ENCODE measurements at regions of chr15 and their contacts with region 1.

Region 1: GRCh38 chr15:74302821-74303359 is 64.6 kb downstream of the CYP11A1 start:
- DNase-seq: peak; percentile 79
- CTCF ChIP-seq: peak; percentile 75

Region 2: DNA sequence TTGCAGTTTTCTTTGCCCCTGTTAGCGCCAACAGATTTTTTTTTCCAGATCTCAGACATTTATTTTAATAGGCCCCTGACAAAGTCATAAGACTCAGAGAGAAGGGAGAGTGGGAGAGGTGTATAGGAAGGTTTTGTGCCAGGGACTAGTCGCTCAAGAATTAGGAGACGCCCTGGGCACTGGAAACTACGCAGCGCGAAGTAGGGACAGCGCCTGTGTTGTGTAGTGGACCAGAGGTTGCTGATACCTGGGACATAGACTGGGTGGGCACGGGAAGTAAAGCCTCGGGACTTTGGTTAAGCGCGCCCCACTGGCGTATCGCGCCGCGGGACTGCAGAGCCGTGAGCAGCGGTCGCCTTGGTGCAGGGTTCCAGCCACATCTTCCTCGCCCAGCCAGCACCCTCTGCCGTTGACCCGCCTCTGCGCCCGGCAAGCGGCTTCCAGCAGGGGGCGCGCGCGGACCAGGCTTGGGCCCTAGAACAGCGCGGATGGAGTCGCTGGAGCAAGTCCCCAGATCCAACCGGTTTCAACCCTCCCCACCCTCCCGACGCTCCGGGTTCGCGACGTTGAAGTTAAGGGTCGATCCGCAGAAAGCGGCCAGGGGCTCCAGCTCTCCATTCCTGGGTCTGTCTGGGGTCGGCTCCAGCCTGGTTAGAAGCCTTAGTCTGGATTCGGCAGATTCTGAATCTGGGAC is 175.5 kb before region 1 on chr15:
- CTCF ChIA-PET with region 1: interaction called, 43 read pairs
- POLR2A ChIA-PET with region 1: no interaction called
- DNase-seq: peak; percentile 83
- CTCF ChIP-seq: peak; percentile 100